HEK293 (cell line): ENCODE measurements at regions of chr12 and their contacts with region 1.

Region 1: GRCh38 chr12:51531978-51532497 is 59.0 kb upstream of the SCN8A start:
- H3K4me3 ChIP-seq: no peak overlapping the region
- H3K27ac ChIP-seq: no peak overlapping the region
- H3K4me1 ChIP-seq: peaks cover 4% of the 10 kb centered on the region; the same call in 1 of the 2 replicates
- CTCF ChIP-seq: peak; percentile 78

Region 2: GRCh38 chr12:51521554-51522276 is 10.3 kb before region 1 on chr12:
- CTCF ChIA-PET with region 1: interaction called, 16 read pairs
- POLR2A ChIA-PET with region 1: no interaction called
- H3K4me3 ChIP-seq: no peak overlapping the region
- H3K27ac ChIP-seq: no peak overlapping the region
- H3K4me1 ChIP-seq: no peaks in the 10 kb centered on the region
- CTCF ChIP-seq: no peak

Region 3: GRCh38 chr12:51818566-51819300 is 286.7 kb after region 1 on chr12:
- CTCF ChIA-PET with region 1: interaction called, 22 read pairs
- POLR2A ChIA-PET with region 1: no interaction called
- H3K4me3 ChIP-seq: no peak overlapping the region
- H3K27ac ChIP-seq: no peak overlapping the region
- H3K4me1 ChIP-seq: no peaks in the 10 kb centered on the region
- CTCF ChIP-seq: no peak

Region 4: GRCh38 chr12:51823875-51824565 is 292.0 kb after region 1 on chr12:
- CTCF ChIA-PET with region 1: interaction called, 22 read pairs
- POLR2A ChIA-PET with region 1: no interaction called
- H3K4me3 ChIP-seq: no peak overlapping the region
- H3K27ac ChIP-seq: no peak overlapping the region
- H3K4me1 ChIP-seq: no peaks in the 10 kb centered on the region
- CTCF ChIP-seq: peak; percentile 52; the same call in 1 of the 2 replicates